ENCODE measurements at regions of chr3 and their contacts with region 1.

Region 1: DNA sequence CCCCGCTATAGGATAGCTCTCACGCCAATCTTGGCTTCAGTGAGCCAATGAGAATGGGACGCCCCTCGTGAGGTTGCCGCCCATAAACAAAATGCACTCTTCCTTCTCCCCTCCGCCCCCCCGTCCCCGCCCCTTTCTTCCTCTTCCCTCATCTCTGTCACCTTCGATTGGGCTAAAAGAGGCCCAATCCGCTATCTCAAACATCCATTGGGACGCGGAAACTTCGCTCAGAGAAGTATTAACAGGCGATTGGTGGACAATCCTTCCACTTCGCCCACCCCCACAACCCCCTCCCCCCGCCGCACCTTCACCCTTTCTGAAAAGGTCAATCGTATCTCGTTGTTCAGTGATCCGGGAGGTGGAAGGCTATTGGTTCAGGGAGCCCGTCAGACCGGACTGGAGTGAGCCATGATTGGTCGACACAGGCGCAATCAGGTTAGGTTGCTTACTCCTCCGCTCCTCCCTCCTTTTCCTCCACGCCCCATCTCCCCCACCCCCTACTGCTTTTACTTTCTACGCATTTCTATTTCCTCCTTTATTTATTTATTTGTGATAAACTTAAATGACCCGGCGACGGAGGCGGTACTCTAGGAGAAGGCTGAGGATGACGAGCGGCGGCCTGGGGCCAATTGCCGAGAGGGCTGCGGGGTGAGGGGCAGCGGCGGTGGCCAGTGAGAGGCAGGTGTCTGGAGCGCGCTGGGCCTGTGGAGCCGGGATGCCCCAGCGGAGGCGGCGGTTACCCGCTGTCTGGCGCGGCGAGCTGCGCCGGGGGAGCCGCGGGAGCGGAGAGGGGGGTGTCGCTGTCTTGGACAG is 447 bp upstream of the ZBTB20 start:
- DNase-seq: peak; percentile 97 to 98
- H3K4me3 ChIP-seq: peak overlapping the region; percentile 76
- H3K27ac ChIP-seq: peak overlapping the region; percentile 47
- H3K4me1 ChIP-seq: peaks cover 17% of the 10 kb centered on the region
- H3K27me3 ChIP-seq: no peaks in the 10 kb centered on the region
- CTCF ChIP-seq: no peak

Region 2: DNA sequence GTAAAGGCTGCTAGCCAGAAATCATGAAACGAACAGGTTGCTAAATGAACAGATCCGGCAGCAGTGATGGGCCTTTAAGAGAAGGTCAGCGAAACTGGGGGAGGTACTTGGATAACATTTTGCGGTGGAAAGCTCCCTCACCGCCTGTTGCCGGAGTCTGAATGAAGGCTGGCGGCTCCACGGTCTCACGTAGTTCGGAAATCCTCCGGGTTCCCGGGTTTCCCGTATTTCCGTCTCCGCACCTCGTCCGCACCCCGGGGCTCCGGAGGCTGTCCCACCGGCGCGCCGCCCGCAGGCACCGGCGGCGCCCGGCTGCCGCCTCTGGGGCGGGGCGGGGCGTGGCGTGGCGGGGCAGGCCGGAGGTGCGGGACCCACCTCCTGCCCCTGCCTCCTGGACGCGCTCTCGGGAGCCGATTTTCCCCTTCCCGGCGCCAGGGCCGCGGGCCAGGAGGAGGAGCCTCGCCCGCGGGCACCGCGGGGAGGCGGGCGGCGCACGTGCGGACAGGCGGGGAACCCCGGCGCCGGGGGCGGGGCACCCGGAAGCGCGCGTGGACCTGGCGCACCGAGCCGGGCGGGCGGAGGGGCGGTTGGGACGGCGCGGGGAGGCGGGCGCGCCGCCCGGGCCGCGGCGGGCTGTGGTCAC is 1200.0 kb before region 1 on chr3 and contains the start of gene ZDHHC23:
- CTCF ChIA-PET with region 1: no interaction called
- POLR2A ChIA-PET with region 1: no interaction called
- intact Hi-C with region 1: loop called (anchors 10 kb)
- DNase-seq: peak; percentile 50 to 94
- H3K4me3 ChIP-seq: peak within 1 kb of the TSS; percentile 82
- H3K27ac ChIP-seq: no peak within 1 kb of the TSS
- H3K4me1 ChIP-seq: peaks cover 7% of the 10 kb centered on the region
- H3K27me3 ChIP-seq: no peaks in the 10 kb centered on the region
- CTCF ChIP-seq: no peak
- total RNA-seq, gene ZDHHC23: 17.5 and 20.9 TPM in 2 replicates

Region 3: GRCh38 chr3:115239717-115240116 is 92.2 kb after region 1 on chr3:
- CTCF ChIA-PET with region 1: no interaction called
- POLR2A ChIA-PET with region 1: no interaction called
- intact Hi-C with region 1: loop called (anchors 2 kb)
- DNase-seq: peak; percentile 59 to 68
- H3K4me3 ChIP-seq: no peak overlapping the region
- H3K27ac ChIP-seq: peak overlapping the region; percentile 43
- H3K4me1 ChIP-seq: peaks cover 12% of the 10 kb centered on the region
- H3K27me3 ChIP-seq: no peaks in the 10 kb centered on the region
- CTCF ChIP-seq: no peak

Region 4: DNA sequence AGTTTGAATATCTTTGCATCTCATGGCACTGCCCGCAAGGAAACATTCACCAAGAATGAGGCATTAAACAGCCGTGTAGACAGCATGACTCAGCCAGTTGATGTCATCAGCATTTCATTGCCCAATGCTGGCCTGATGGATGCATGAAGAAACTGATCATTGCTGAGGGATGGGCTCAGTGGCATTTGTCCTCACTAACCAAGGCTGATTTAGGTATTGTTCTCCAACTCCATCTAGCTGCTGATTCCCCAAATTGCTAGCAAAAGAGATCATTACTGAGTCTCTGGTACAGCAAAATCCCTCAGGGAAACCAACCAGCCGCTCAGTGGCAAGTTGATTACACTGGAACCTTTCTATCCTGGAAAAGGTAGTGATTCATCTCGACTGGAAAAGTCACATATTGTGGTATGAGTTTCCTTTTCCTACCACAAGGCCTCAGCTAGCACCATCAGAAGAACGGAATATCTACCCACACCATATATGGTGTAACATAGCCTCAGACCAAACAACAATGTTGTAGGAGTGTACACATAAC is 289.3 kb after region 1 on chr3:
- CTCF ChIA-PET with region 1: no interaction called
- POLR2A ChIA-PET with region 1: no interaction called
- intact Hi-C with region 1: loop called (anchors 5 kb)
- DNase-seq: peak; percentile 48 to 52
- H3K4me3 ChIP-seq: no peak overlapping the region
- H3K27ac ChIP-seq: no peak overlapping the region
- H3K4me1 ChIP-seq: peaks cover 7% of the 10 kb centered on the region; the same call in 1 of the 2 replicates
- H3K27me3 ChIP-seq: no peaks in the 10 kb centered on the region
- CTCF ChIP-seq: peak; percentile 35; the same call in 1 of the 2 replicates

Region 5: GRCh38 chr3:115783938-115784738 is 636.6 kb after region 1 on chr3:
- CTCF ChIA-PET with region 1: no interaction called
- POLR2A ChIA-PET with region 1: interaction called, 5 read pairs
- intact Hi-C with region 1: loop called (anchors 1 kb)
- DNase-seq: peak; percentile 83 to 95
- H3K4me3 ChIP-seq: peak overlapping the region; percentile 73
- H3K27ac ChIP-seq: peak overlapping the region; percentile 63
- H3K4me1 ChIP-seq: peaks cover 35% of the 10 kb centered on the region
- H3K27me3 ChIP-seq: no peaks in the 10 kb centered on the region
- CTCF ChIP-seq: peak; percentile 95